ENCODE measurements at regions of chrX and their contacts with region 1.

Region 1: DNA sequence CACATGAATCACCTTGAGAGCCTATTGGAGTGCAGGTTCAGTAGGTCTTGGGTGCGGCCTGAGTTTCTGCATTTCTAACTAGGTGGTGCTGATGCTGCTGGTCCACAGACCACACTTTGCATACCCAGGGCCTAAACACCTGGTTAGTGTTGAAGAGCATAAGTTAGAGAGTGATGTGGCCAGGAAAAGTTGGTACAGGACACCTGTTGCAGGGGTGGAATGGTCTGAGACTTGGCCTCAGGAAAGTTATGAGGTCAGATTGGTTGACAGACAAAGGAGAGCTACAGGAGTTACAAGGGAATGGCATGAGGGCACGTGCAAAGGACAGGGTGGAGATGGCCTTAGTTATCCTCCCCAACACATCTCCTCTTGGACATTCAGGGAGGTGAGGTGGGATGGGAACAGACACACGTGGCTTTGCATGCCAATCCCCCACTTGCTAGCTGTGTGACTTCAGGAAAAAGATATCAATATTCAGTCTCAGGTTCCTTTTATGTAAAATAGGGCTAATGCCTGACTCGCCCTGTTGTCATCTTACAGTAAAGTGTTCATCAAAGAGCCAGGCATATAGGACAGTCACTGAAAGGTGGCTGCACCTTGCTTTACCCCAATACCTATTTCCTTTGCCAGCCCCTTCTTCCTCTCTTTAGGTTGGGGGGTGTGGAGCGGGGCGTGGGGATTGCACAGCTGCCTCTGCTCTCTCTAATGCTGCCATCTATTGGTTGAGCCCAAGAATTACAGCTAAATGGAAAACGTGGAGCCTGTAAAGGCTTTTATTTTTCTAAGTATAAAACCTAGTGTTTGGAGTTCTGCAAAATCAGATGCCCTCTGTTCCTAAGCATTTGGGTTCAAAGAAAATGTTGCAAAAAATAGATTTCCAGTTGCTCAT is 47.5 kb downstream of the ATG4A start:
- DNase-seq: no peak
- ATAC-seq: peak; percentile 27

Region 2: DNA sequence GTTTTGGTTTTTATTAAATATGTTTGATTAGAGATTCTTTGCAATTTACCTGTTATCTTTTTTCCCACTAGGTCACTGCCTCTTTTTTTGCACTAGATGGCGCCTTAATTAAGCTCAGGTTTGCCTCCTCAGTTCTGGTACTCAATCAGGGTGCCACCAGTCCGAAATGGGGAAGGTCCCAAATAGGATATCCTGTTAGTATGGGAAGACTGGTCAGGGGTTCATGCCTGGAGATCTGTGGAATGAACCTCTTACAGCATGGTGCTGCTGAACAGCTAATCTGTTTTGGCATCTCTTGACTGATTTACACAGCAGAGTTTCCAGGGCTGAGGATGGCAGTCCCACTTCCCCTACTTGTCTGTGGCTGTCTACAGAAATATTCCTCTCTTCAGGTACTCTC is 118.4 kb before region 1 on chrX:
- intact Hi-C with region 1: loop called (anchors 5 kb)
- DNase-seq: no peak
- ATAC-seq: no peak

Region 3: GRCh38 chrX:108285356-108285755 is 146.3 kb after region 1 on chrX:
- intact Hi-C with region 1: no loop called
- DNase-seq: no peak
- ATAC-seq: no peak

Measured in Right ventricle myocardium superior (tissue), 1 donor.